ENCODE measurements at regions of chr9 and their contacts with region 1.

Region 1: GRCh38 chr9:122125158-122125508 is 32.0 kb upstream of the TTLL11 start:
- DNase-seq: peak; percentile 84
- ATAC-seq: peak; percentile 59
- H3K4me3 Mint-ChIP-seq: peak overlapping the region; percentile 73
- H3K27ac Mint-ChIP-seq: no peak overlapping the region
- H3K4me1 Mint-ChIP-seq: peaks cover 22% of the 10 kb centered on the region
- H3K27me3 Mint-ChIP-seq: peaks cover 38% of the 10 kb centered on the region
- CTCF ChIP-seq: peak; percentile 88

Region 2: DNA sequence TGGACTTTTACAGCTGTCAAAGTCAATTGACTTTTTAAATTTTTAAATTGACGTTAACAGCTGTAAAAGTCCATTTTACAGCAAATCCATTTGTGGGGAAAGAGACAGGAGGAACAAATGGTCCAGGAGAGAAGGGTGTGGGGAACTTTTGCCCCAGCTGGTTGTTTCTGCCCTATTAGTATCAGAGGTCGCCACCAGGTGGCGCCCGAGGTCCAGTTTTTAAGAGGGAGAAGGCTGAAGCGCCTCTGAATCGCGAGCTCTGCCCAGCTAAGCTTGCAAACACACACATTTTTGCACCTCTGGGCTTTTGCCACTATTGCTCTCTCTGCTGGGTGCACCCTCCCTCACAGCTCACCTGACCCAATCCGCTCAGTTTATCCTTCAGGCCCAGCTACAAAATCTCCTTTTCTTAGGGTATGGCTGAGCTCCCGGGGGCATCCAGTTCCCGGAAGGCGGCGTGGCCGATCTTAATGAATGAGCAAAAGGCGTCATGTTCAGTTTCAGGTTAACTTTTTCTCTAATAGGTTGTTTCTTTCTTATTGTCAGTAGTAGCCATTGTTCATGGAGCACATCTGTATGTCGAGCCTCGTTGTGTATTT is 25.8 kb before region 1 on chr9:
- CTCF ChIA-PET with region 1: interaction called, 627 read pairs
- POLR2A ChIA-PET with region 1: interaction called, 6 read pairs
- DNase-seq: peak; percentile 86
- ATAC-seq: peak; percentile 87
- H3K4me3 Mint-ChIP-seq: no peak overlapping the region
- H3K27ac Mint-ChIP-seq: no peak overlapping the region
- H3K4me1 Mint-ChIP-seq: peaks cover 13% of the 10 kb centered on the region
- H3K27me3 Mint-ChIP-seq: peaks cover 17% of the 10 kb centered on the region
- CTCF ChIP-seq: peak; percentile 94

Region 3: DNA sequence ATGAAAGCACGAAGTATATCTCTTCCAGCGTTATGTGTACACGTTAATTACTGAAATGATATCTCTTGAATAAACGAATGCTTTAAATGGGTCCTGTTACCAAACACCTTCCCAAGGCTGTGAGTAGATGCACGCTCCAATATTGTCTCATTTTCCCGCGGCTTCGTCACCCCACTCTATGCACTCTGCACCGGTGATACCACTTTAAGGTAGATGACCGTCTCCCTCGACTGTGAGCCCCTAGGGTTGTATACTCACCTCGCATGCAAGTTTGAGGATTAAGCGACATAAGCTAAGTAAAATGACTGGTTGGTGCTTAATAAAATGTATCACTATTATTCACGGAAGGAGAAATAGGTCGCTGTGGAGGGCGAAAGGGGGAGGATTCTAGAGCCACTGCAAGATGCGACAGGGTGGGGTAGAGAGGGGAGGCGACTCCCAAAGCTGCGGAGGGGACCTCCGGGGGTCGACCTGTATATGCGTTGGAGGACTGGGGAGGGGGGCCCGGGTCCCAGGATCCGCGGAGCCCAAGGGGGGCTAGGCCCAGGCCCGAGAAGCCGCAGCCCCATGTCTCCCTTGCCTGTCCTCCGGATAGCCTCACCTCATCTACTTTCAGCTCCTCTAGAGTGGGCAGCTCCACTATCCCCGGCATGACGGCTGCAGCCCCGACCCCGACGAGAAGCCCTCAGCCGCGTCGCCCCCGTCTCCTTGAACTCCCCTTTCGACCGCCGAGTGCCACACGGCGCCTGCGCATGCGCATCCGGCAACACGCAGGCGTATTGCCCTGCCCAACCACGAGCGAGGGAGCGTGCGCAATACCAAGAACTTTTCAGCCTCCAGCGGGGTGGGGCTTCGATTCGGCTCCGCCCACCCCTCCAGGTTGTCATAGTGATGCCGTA is 34.1 kb after region 1 on chr9 and contains the starts of genes MORN5 and NDUFA8:
- CTCF ChIA-PET with region 1: interaction called, 24 read pairs
- POLR2A ChIA-PET with region 1: no interaction called
- DNase-seq: peak; percentile 99
- ATAC-seq: peak; percentile 96
- H3K4me3 Mint-ChIP-seq: peak within 1 kb of the TSS; percentile 96
- H3K27ac Mint-ChIP-seq: peak within 1 kb of the TSS; percentile 93
- H3K4me1 Mint-ChIP-seq: peaks cover 19% of the 10 kb centered on the region
- H3K27me3 Mint-ChIP-seq: peaks cover 31% of the 10 kb centered on the region
- CTCF ChIP-seq: no peak
- total RNA-seq, gene MORN5: not detected in 3 replicates
- total RNA-seq, gene NDUFA8: 70.7 to 71.8 TPM (median 71.2 TPM) in 3 replicates

Region 4: DNA sequence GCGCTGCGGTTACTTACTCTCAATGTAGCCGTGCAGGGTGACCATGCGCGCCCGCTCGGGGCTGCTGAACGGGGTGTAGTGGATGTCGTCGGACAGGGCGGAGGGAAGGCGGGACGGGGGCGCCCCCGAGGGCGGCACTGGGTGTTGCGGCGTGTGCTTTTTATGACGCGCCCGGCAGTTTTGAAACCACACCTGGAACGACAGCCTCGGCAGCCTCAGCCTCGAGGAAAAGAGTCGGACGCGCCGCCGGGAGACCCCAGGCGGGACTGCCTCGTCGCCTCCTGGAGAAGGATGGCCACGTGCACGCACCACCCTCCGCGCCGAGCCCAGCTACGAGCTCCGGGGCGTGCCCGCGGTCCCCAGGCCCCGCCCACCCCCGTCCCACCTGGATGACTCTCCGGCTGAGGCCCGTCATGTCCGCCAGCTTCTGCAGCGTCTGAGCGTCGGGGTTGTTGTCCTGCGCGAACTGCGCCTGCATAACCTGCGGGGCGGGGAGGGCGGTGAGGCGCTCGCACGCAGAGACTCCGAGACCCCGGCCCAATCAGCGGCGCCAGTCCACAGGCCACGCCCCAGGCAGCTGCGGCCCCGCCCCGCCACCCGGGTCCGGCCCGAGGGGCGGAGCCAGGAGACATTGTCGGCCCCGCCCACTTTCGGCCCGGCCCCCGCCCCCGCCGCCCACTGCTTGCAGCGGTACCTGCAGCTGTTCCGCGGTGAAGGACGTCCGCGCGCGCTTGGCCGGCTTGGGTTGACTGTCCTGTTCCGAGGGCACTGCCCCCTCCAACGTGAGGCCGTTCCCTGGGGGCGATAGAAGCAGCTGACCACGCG is 88.7 kb after region 1 on chr9:
- CTCF ChIA-PET with region 1: interaction called, 39 read pairs
- POLR2A ChIA-PET with region 1: no interaction called
- DNase-seq: peak; percentile 94
- ATAC-seq: peak; percentile 94
- H3K4me3 Mint-ChIP-seq: peak overlapping the region; percentile 70
- H3K27ac Mint-ChIP-seq: no peak overlapping the region
- H3K4me1 Mint-ChIP-seq: peaks cover 27% of the 10 kb centered on the region
- H3K27me3 Mint-ChIP-seq: peaks cover 89% of the 10 kb centered on the region
- CTCF ChIP-seq: no peak

Region 5: GRCh38 chr9:122338994-122339393 is 213.9 kb after region 1 on chr9:
- CTCF ChIA-PET with region 1: interaction called, 71 read pairs
- POLR2A ChIA-PET with region 1: no interaction called
- DNase-seq: no peak
- ATAC-seq: no peak
- H3K4me3 Mint-ChIP-seq: no peak overlapping the region
- H3K27ac Mint-ChIP-seq: no peak overlapping the region
- H3K4me1 Mint-ChIP-seq: peaks cover 60% of the 10 kb centered on the region
- H3K27me3 Mint-ChIP-seq: peaks cover 8% of the 10 kb centered on the region
- CTCF ChIP-seq: no peak

Region 6: GRCh38 chr9:122453677-122454135 is 328.6 kb after region 1 on chr9:
- CTCF ChIA-PET with region 1: interaction called, 10 read pairs
- POLR2A ChIA-PET with region 1: no interaction called
- DNase-seq: no peak
- ATAC-seq: no peak
- H3K4me3 Mint-ChIP-seq: no peak overlapping the region
- H3K27ac Mint-ChIP-seq: no peak overlapping the region
- H3K4me1 Mint-ChIP-seq: no peaks in the 10 kb centered on the region
- H3K27me3 Mint-ChIP-seq: peaks cover 9% of the 10 kb centered on the region
- CTCF ChIP-seq: no peak; the same call in 1 of the 2 replicates

Region 7: GRCh38 chr9:122572456-122572855 is 447.3 kb after region 1 on chr9:
- CTCF ChIA-PET with region 1: no interaction called
- POLR2A ChIA-PET with region 1: no interaction called
- DNase-seq: no peak
- ATAC-seq: no peak
- H3K4me3 Mint-ChIP-seq: no peak overlapping the region
- H3K27ac Mint-ChIP-seq: no peak overlapping the region
- H3K4me1 Mint-ChIP-seq: no peaks in the 10 kb centered on the region
- H3K27me3 Mint-ChIP-seq: peaks cover 25% of the 10 kb centered on the region
- CTCF ChIP-seq: no peak

Measured in WTC11 (cell line).